ENCODE measurements at regions of chr12 and their contacts with region 1.

Region 1: DNA sequence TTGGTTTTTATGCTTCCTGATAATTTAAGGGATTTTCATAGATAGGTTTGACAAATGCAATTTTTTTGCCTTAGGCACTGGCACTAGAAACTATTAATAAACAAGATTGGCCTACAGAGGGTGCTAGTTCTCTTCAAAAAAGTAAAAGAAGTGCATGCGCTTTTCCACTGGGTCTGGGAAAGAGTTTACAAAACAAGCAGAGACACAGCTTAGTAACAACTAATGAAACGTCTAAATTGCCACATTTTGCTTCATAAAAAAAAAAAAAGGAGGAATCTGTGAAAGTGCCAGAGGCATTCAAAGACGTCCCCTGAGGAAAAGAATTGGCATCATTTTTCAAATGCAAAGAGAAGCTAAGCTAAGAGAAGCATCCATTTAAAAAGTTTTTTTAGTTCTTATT is 58.3 kb upstream of the EEA1 start:
- DNase-seq: peak; percentile 79
- H3K4me3 ChIP-seq: peak overlapping the region; percentile 54
- H3K27ac ChIP-seq: peak overlapping the region; percentile 88
- H3K4me1 ChIP-seq: peaks cover 45% of the 10 kb centered on the region
- CTCF ChIP-seq: peak; percentile 92

Region 2: GRCh38 chr12:93079271-93079670 is 91.9 kb after region 1 on chr12:
- CTCF ChIA-PET with region 1: no interaction called
- POLR2A ChIA-PET with region 1: interaction called, 3 read pairs
- intact Hi-C with region 1: loop called (anchors 5 kb)
- DNase-seq: no peak
- H3K4me3 ChIP-seq: no peak overlapping the region
- H3K27ac ChIP-seq: no peak overlapping the region
- H3K4me1 ChIP-seq: no peaks in the 10 kb centered on the region
- CTCF ChIP-seq: no peak

Region 3: DNA sequence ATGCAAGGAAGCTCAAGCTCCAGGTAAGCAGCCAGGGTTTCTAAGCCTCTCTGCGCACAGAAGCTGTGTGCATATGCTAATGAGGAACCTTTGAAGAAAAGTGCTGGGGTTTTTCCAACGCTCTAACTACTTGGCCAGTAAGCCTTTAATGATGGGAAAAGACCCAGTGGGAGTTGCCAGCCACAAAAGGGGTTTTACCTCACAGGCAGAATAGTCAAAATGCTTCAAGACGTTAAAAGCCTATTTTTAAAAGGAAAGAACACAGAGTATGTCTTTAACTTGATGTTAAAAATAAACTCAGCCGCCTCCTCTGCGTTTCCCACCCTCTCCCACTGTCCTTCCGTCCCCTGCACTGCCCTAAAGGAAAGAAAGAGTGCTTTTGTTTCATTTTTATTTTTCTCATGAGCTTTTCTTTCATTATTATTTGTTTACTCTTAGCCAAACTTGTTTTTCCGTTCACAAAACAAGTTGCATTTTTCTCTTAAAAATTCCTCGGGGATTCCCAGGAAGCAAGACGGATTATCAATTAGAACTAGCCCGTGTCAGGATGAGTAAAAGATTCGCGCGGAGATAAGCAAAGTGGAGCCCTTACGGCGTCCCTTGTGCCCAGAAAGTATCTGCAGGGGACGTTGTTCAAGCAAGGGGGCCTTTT is 180.6 kb after region 1 on chr12:
- CTCF ChIA-PET with region 1: interaction called, 4 read pairs
- POLR2A ChIA-PET with region 1: interaction called, 3 read pairs
- intact Hi-C with region 1: loop called (anchors 2 kb)
- DNase-seq: peak; percentile 58
- H3K4me3 ChIP-seq: peak overlapping the region; percentile 59
- H3K27ac ChIP-seq: peak overlapping the region; percentile 90
- H3K4me1 ChIP-seq: peaks cover 44% of the 10 kb centered on the region
- CTCF ChIP-seq: no peak

Region 4: GRCh38 chr12:93397412-93397811 is 410.1 kb after region 1 on chr12:
- CTCF ChIA-PET with region 1: interaction called, 7 read pairs
- POLR2A ChIA-PET with region 1: interaction called, 5 read pairs
- intact Hi-C with region 1: loop called (anchors 2 kb)
- DNase-seq: no peak
- H3K4me3 ChIP-seq: no peak overlapping the region
- H3K27ac ChIP-seq: no peak overlapping the region
- H3K4me1 ChIP-seq: peaks cover 6% of the 10 kb centered on the region
- CTCF ChIP-seq: no peak

Region 5: DNA sequence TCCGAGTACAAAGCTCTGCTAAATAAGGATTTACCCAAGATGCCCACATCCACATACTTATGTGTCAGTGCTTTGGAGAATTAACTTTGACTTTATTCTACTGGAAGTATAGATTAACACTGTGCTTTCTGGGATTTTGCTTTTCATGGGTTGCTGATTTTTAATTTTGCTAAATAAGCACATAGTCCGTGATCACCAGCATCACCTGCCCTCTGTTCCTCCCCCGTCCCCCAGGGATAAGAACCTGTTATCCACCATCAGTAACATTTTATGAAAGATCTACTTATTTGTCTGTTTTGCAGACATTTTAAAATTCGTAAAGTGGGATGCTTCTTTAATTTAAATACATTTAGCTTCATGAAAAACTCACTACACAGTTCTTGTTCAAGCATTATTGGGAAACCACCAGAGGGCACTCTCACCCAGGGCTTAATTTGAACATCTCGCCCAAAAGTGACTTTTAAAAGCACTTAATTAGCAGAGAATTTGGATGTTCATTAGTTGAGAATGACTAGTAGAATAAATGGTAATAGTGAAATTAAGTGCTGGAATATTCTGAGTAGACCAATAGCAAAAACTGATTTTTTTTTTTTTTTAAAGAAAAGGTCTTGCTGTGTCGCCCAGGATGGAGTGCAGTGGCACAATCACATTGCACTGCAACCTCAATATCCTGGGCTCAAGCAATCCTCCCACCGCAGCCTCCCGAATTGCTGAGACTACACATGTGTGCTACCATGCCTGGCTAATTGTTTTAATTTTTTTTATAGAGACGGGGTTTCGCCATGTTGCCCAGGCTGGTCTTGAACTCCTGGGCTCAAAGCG is 515.7 kb after region 1 on chr12:
- CTCF ChIA-PET with region 1: no interaction called
- POLR2A ChIA-PET with region 1: no interaction called
- intact Hi-C with region 1: loop called (anchors 2 kb)
- DNase-seq: peak; percentile 53
- H3K4me3 ChIP-seq: no peak overlapping the region
- H3K27ac ChIP-seq: no peak overlapping the region
- H3K4me1 ChIP-seq: no peaks in the 10 kb centered on the region
- CTCF ChIP-seq: peak; percentile 100

Measured in OCI-LY7 (cell line).